ENCODE measurements at regions of chr4 and their contacts with region 1.

Region 1: DNA sequence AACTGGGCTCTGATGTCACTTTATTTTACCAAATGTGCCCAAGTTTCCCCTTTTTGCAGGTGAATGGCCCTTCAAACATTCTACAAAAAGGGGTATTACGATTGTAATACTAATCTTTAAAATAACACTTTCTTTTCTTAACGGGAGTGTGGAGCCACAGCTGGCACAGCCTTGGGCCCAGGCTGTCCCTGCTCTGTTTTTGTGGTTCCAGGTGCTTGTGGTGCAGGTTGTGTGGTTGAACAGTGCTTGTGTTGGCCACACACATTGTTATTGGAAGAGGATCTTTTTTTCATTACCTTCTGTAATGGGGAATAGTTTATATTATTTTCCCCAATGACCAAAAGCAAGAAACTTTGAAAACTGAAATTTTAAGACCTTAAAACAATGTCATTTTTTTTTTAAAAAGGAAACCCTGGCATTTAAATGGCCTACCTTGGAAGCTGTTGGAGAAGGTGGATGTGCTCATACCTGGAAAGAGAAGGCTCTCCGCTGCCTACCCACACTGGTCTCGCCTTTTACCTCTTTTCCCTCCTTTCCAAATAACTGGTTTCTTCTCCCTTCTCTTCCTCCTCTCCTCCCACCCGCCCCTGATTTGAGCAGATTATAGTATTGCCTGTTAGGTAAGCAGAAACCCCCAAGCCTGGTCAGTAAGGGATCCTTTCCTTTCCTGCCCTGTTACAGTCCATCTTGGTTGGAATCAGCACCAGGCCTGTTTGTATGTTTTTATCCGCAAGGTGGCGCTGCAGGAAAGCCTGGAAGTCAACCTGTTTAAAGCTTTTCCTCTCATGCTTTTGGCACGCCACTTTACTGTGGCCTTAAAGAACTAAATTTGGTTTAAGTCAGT is 28.6 kb downstream of the HADH start:
- DNase-seq: peak; percentile 92
- ATAC-seq: peak; percentile 83
- H3K4me3 Mint-ChIP-seq: no peak overlapping the region
- H3K27ac Mint-ChIP-seq: no peak overlapping the region
- H3K4me1 Mint-ChIP-seq: peaks cover 14% of the 10 kb centered on the region
- H3K27me3 Mint-ChIP-seq: no peaks in the 10 kb centered on the region
- CTCF ChIP-seq: peak; percentile 85

Region 2: GRCh38 chr4:107734120-107734519 is 284.1 kb before region 1 on chr4:
- CTCF ChIA-PET with region 1: no interaction called
- POLR2A ChIA-PET with region 1: no interaction called
- intact Hi-C with region 1: no loop called
- DNase-seq: peak; percentile 24
- ATAC-seq: peak; percentile 67
- H3K4me3 Mint-ChIP-seq: no peak overlapping the region
- H3K27ac Mint-ChIP-seq: no peak overlapping the region
- H3K4me1 Mint-ChIP-seq: no peaks in the 10 kb centered on the region
- H3K27me3 Mint-ChIP-seq: no peaks in the 10 kb centered on the region
- CTCF ChIP-seq: peak; percentile 23

Region 3: DNA sequence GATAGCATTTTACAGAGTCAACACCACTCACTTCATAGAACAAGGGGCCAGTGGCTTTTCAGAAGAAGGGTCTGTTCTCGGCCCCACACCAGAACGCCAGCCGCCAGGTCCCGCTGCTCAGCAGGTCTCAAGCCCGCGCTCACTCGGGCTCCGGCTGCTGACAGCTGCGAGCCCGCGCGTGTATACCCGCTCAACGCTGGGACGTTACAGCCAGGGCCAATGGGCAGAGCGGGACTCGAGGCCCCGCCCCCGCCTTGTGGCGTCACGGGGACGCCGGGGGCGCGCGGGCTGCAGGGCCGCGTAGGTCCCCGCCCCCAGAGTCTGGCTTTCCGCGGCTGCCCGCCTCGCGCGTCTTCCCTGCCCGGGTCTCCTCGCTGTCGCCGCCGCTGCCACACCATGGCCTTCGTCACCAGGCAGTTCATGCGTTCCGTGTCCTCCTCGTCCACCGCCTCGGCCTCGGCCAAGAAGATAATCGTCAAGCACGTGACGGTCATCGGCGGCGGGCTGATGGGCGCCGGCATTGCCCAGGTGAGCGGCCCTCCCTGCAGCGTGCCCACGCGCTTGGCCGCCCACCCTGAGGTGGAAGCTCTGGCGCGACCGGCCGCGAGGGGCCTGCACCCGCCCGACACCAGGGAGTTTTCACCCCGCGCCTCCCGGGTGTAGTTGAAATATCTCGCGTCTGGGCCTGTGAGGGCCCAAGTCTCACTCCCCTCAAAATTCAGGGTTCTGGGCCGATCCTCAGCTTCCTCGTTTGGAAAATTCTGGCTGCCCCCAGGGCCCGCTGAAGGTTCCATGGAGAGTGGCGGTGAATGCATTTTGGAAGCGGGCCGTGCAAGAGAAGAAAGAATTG is 28.5 kb before region 1 on chr4 and contains the start of gene HADH:
- CTCF ChIA-PET with region 1: interaction called, 11 read pairs
- POLR2A ChIA-PET with region 1: interaction called, 4 read pairs
- intact Hi-C with region 1: no loop called
- DNase-seq: peak; percentile 95
- ATAC-seq: peak; percentile 98
- H3K4me3 Mint-ChIP-seq: peak within 1 kb of the TSS; percentile 81
- H3K27ac Mint-ChIP-seq: peak within 1 kb of the TSS; percentile 92
- H3K4me1 Mint-ChIP-seq: peaks cover 39% of the 10 kb centered on the region
- H3K27me3 Mint-ChIP-seq: no peaks in the 10 kb centered on the region
- CTCF ChIP-seq: no peak
- total RNA-seq, gene HADH: 50.3 to 50.7 TPM

Region 4: GRCh38 chr4:108036213-108036612 is 18.0 kb after region 1 on chr4:
- CTCF ChIA-PET with region 1: interaction called, 55 read pairs
- POLR2A ChIA-PET with region 1: no interaction called
- intact Hi-C with region 1: no loop called
- DNase-seq: peak; percentile 89
- ATAC-seq: peak; percentile 83
- H3K4me3 Mint-ChIP-seq: peak overlapping the region; percentile 71
- H3K27ac Mint-ChIP-seq: peak overlapping the region; percentile 98
- H3K4me1 Mint-ChIP-seq: peaks cover 61% of the 10 kb centered on the region
- H3K27me3 Mint-ChIP-seq: no peaks in the 10 kb centered on the region
- CTCF ChIP-seq: no peak

Region 5: GRCh38 chr4:108045694-108046038 is 27.4 kb after region 1 on chr4:
- CTCF ChIA-PET with region 1: interaction called, 12 read pairs
- POLR2A ChIA-PET with region 1: no interaction called
- intact Hi-C with region 1: no loop called
- DNase-seq: peak; percentile 45
- ATAC-seq: peak; percentile 56
- H3K4me3 Mint-ChIP-seq: no peak overlapping the region
- H3K27ac Mint-ChIP-seq: peak overlapping the region; percentile 72
- H3K4me1 Mint-ChIP-seq: peaks cover 60% of the 10 kb centered on the region
- H3K27me3 Mint-ChIP-seq: no peaks in the 10 kb centered on the region
- CTCF ChIP-seq: no peak

Region 6: GRCh38 chr4:108492816-108493595 is 474.7 kb after region 1 on chr4:
- CTCF ChIA-PET with region 1: interaction called, 19 read pairs
- POLR2A ChIA-PET with region 1: no interaction called
- intact Hi-C with region 1: no loop called
- DNase-seq: peak; percentile 41
- ATAC-seq: peak; percentile 60
- H3K4me3 Mint-ChIP-seq: no peak overlapping the region
- H3K27ac Mint-ChIP-seq: no peak overlapping the region
- H3K4me1 Mint-ChIP-seq: no peaks in the 10 kb centered on the region
- H3K27me3 Mint-ChIP-seq: no peaks in the 10 kb centered on the region
- CTCF ChIP-seq: peak; percentile 64

Region 7: GRCh38 chr4:108560616-108561015 is 542.4 kb after region 1 on chr4:
- CTCF ChIA-PET with region 1: interaction called, 11 read pairs
- POLR2A ChIA-PET with region 1: interaction called, 3 read pairs
- intact Hi-C with region 1: no loop called
- DNase-seq: no peak
- ATAC-seq: no peak
- H3K4me3 Mint-ChIP-seq: no peak overlapping the region
- H3K27ac Mint-ChIP-seq: no peak overlapping the region
- H3K4me1 Mint-ChIP-seq: peaks cover 5% of the 10 kb centered on the region
- H3K27me3 Mint-ChIP-seq: no peaks in the 10 kb centered on the region
- CTCF ChIP-seq: no peak

Measured in activated CD8-positive, alpha-beta T cell treated with anti-CD3 and anti-CD28 coated beads for 36 hours (primary cell).